ENCODE measurements at regions of chr10 and their contacts with region 1.

Region 1: DNA sequence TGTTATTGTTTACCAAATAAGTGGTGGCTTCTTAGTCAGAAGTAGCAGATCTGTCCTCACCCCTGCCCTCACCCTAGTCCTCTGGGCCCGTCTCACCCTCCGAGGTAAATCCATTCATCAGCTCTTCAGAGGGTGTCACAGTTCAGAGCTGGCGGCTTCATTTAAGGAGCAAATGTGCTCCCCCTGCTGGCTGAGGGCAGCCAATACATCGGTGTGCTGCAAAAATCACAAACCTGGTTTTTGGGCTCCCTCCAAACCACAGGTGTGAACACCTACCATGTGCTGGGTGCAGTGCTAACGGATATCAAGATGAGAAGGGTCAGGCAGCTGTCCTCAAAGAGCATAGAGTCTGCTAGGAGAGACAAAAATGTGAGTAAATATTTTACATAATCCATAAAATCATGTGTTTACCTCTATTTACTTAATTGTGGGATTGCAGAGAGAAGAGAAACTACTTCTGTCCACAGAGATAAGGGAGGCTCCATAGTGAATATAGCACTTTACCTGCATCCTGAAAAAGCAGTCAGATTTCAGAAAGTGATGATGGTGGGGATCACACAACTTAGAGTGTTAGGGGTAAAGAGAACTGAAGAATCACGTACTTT is 15.5 kb upstream of the CRTAC1 start:
- DNase-seq: peak; percentile 49 to 79
- H3K4me3 ChIP-seq: no peak overlapping the region
- H3K27ac ChIP-seq: no peak overlapping the region
- H3K4me1 ChIP-seq: no peaks in the 10 kb centered on the region
- H3K27me3 ChIP-seq: peaks cover 0 to 12% (median 6%) of the 10 kb centered on the region in 4 experiments; a peak in 4 of 7 replicates
- CTCF ChIP-seq: peak; percentile 68 to 88 (median 73)
- EP300 ChIP-seq: no peak
- POLR2A ChIP-seq: no peak
- RAD21 ChIP-seq: peak; percentile 55 to 70

Region 2: GRCh38 chr10:97903128-97904017 is 142.5 kb before region 1 on chr10:
- CTCF ChIA-PET with region 1: interaction called, 87 read pairs
- POLR2A ChIA-PET with region 1: no interaction called
- DNase-seq: no peak
- H3K4me3 ChIP-seq: no peak overlapping the region
- H3K27ac ChIP-seq: no peak overlapping the region
- H3K4me1 ChIP-seq: peaks cover 0 to 4% (median 1%) of the 10 kb centered on the region in 4 experiments; a peak in 3 of 7 replicates
- H3K27me3 ChIP-seq: no peaks in the 10 kb centered on the region; a peak in 2 of 7 replicates
- CTCF ChIP-seq: peak in 1 of 3 experiments; percentile 12; a peak in 1 of 4 replicates
- EP300 ChIP-seq: no peak
- POLR2A ChIP-seq: no peak
- RAD21 ChIP-seq: peak in 1 of 2 experiments; percentile 43; a peak in 2 of 4 replicates

Region 3: DNA sequence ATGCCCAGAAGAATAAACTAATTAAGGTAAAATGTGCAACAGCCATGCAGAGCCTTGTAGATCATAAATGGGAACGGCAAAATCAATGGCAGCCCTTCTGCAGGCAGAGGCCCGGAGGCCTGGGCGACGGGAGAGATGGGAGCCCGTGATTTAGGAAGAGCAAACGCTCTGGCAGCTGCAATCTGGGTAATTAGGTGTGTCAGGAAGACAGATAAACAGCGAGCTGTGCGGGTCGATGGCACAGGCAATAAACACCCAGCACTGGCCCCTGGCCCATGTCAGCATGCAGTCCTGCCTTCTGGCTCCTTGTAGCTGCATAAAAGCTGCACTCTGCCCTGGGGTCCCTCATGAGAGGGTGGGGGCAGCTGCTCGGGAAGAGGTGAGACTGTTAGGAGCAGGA is 118.3 kb before region 1 on chr10:
- CTCF ChIA-PET with region 1: interaction called, 246 read pairs
- POLR2A ChIA-PET with region 1: no interaction called
- DNase-seq: no peak
- H3K4me3 ChIP-seq: no peak overlapping the region
- H3K27ac ChIP-seq: no peak overlapping the region
- H3K4me1 ChIP-seq: no peaks in the 10 kb centered on the region
- H3K27me3 ChIP-seq: no peaks in the 10 kb centered on the region
- CTCF ChIP-seq: no peak
- EP300 ChIP-seq: no peak
- POLR2A ChIP-seq: no peak
- RAD21 ChIP-seq: no peak

Region 4: GRCh38 chr10:97974526-97975525 is 71.1 kb before region 1 on chr10:
- CTCF ChIA-PET with region 1: interaction called, 14 read pairs
- POLR2A ChIA-PET with region 1: no interaction called
- DNase-seq: peak in 1 of 2 experiments; percentile 59
- H3K4me3 ChIP-seq: peak overlapping the region; percentile 33 to 67 (median 45)
- H3K27ac ChIP-seq: no peak overlapping the region
- H3K4me1 ChIP-seq: peaks cover 0 to 5% (median 4%) of the 10 kb centered on the region in 4 experiments
- H3K27me3 ChIP-seq: peaks cover 12 to 27% (median 26%) of the 10 kb centered on the region in 4 experiments
- CTCF ChIP-seq: no peak
- EP300 ChIP-seq: no peak
- POLR2A ChIP-seq: no peak
- RAD21 ChIP-seq: no peak

Region 5: DNA sequence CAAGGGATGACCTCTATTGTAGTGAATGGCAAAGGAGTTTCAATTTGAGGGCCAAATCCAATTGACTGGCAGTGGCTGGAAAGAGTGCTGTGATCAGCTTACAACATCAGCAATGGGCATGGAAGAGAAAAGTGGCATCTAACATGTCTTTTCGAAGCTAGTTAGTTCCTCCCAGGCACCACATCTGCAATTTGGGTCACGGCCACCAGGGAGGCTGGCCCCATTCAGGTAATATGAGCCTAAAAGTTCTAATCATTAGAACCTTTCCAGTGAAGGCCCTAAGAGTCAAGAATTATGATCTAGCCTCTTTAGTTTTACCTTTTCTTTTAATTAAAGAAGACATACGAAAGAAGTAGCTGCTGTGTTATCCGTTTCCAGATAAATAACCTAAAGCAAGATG is 32.8 kb before region 1 on chr10:
- CTCF ChIA-PET with region 1: interaction called, 26 read pairs
- POLR2A ChIA-PET with region 1: no interaction called
- DNase-seq: no peak
- H3K4me3 ChIP-seq: no peak overlapping the region
- H3K27ac ChIP-seq: no peak overlapping the region
- H3K4me1 ChIP-seq: peaks cover 0 to 3% (median under 1%) of the 10 kb centered on the region in 4 experiments; a peak in 1 of 7 replicates
- H3K27me3 ChIP-seq: no peaks in the 10 kb centered on the region; a peak in 1 of 7 replicates
- CTCF ChIP-seq: peak; percentile 15 to 59 (median 55); a peak in 3 of 4 replicates
- EP300 ChIP-seq: no peak
- POLR2A ChIP-seq: no peak
- RAD21 ChIP-seq: peak in 1 of 2 experiments; percentile 11; a peak in 1 of 4 replicates

Region 6: GRCh38 chr10:98062424-98062823 is 16.5 kb after region 1 on chr10:
- CTCF ChIA-PET with region 1: interaction called, 17 read pairs
- POLR2A ChIA-PET with region 1: no interaction called
- DNase-seq: no peak
- H3K4me3 ChIP-seq: no peak overlapping the region
- H3K27ac ChIP-seq: no peak overlapping the region
- H3K4me1 ChIP-seq: peaks cover 0 to 9% (median 2%) of the 10 kb centered on the region in 4 experiments; a peak in 2 of 7 replicates
- H3K27me3 ChIP-seq: peaks cover 0 to 2% (median 0%) of the 10 kb centered on the region in 4 experiments; a peak in 1 of 7 replicates
- CTCF ChIP-seq: no peak
- EP300 ChIP-seq: no peak
- POLR2A ChIP-seq: no peak
- RAD21 ChIP-seq: no peak

Region 7: GRCh38 chr10:98309366-98310355 is 263.8 kb after region 1 on chr10:
- CTCF ChIA-PET with region 1: interaction called, 10 read pairs
- POLR2A ChIA-PET with region 1: no interaction called
- DNase-seq: peak; percentile 58 to 86
- H3K4me3 ChIP-seq: peak overlapping the region in 3 of 4 experiments; percentile 13 to 48 (median 36); a peak in 6 of 8 replicates
- H3K27ac ChIP-seq: no peak overlapping the region
- H3K4me1 ChIP-seq: peaks cover 0 to 7% (median 5%) of the 10 kb centered on the region in 4 experiments; a peak in 6 of 7 replicates
- H3K27me3 ChIP-seq: no peaks in the 10 kb centered on the region
- CTCF ChIP-seq: peak; percentile 89 to 94 (median 90)
- EP300 ChIP-seq: no peak
- POLR2A ChIP-seq: no peak
- RAD21 ChIP-seq: peak; percentile 90 to 95

Region 8: GRCh38 chr10:98748298-98748697 is 702.4 kb after region 1 on chr10:
- CTCF ChIA-PET with region 1: no interaction called
- POLR2A ChIA-PET with region 1: no interaction called
- DNase-seq: peak; percentile 2 to 47
- H3K4me3 ChIP-seq: no peak overlapping the region
- H3K27ac ChIP-seq: no peak overlapping the region
- H3K4me1 ChIP-seq: no peaks in the 10 kb centered on the region
- H3K27me3 ChIP-seq: no peaks in the 10 kb centered on the region
- CTCF ChIP-seq: peak in 2 of 3 experiments; percentile 41 to 55; a peak in 2 of 4 replicates
- EP300 ChIP-seq: no peak
- POLR2A ChIP-seq: no peak
- RAD21 ChIP-seq: peak; percentile 66 to 70